Pancreas (tissue), 10 donors: ENCODE measurements at regions of chr5 and their contacts with region 1.

Region 1: DNA sequence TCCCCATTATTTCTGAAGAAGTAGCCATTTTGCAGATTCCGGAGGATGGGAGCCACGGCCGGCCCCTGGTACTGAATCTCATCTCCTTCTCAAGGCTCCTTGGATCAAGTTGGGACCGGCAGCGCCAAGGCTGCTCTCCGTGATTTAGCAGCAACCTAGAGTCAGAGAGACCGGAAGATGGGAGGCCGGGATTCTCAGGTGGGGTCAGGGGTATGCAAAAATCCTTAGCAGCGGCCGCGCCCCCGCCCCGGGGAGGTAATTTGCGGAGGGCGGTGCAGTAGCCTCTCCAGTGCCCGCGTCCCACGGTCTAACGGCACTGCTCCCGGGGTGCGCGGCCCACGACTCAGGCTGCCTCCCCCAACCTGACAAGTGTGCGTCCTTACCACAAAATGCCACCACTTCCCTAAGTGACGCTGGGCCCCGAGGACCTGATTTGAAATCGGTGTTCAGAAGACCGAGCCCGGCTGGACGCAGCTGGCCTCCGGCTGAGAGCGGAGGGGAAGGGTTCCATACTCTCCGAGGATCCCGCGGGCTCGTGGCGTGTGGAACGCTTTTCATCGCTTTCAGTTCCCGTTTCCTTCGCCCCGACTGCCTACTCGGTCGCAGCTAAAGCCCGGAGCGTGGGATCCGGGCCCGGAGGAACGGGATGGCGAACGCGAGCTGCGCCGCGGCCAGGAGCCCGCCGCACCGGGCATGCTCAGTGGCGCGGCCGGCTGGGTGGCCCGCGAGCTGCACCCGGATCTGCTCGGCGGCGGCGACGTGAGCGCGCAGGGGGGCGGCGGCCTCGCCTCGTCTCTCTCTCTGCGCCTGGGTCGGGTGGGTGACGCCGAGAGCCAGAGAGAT is at the start of gene SCAMP1:
- DNase-seq: peak; percentile 88 to 97 (median 94)
- ATAC-seq: peak; percentile 93 to 97 (median 94)
- H3K4me3 ChIP-seq: peak within 1 kb of the TSS; percentile 75 to 98 (median 88)
- H3K27ac ChIP-seq: peak within 1 kb of the TSS; percentile 88 to 98 (median 92)
- H3K4me1 ChIP-seq: peaks cover 0 to 15% (median 15%) of the 10 kb centered on the region in 3 donors
- H3K27me3 ChIP-seq: no peaks in the 10 kb centered on the region
- CTCF ChIP-seq: peak in 3 of 4 donors; percentile 29 to 40 (median 31)
- total RNA-seq, gene SCAMP1: 16.0 to 29.9 (median 24.3) TPM

Region 2: DNA sequence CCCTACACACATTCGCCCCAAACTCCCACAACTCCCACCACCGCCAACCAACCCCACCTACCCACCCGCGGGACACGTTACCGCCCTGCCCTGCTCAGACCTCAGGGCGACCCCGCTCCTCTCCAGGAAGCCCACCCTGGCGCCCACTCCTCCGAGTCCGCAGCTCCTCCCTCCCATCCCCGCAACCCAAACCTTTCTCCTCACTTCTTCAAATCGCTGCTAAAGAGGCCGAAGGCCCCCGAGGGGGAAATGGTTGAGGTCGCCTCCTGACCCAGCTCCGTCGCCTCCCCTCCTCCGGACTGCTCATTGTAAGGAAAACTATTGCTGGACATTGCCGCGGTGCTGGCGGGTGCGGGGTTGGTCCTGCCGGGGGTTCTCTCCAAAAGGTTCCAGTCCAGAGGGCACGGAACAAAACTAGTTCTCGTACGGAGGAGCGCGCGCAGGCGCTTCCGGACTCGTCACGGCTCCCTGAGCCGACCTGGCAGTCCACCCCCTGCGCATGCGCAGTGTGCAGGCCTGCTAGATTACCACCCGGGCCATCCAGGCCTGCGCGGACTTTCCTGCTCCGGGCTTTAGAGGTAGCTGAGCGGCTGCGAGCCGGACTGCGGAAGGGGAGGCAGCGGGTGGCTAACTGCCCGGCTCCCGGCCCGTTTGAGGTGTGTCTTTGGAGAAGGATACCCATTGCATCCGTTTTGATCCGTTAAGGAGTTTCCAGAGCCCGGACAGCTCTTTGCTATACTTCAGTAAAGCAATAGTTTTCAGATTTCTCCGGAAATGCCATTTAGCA is 65.6 kb before region 1 on chr5 and contains the start of gene AP3B1:
- intact Hi-C with region 1: loop called in 2 of 3 experiments (anchors 2 to 5 kb)
- DNase-seq: peak; percentile 99 to 100 (median 100)
- ATAC-seq: peak; percentile 95 to 99 (median 96)
- H3K4me3 ChIP-seq: peak within 1 kb of the TSS; percentile 57 to 64 (median 60)
- H3K27ac ChIP-seq: peak within 1 kb of the TSS; percentile 46 to 86 (median 77)
- H3K4me1 ChIP-seq: peaks cover 8 to 17% (median 16%) of the 10 kb centered on the region in 3 donors
- H3K27me3 ChIP-seq: no peaks in the 10 kb centered on the region
- CTCF ChIP-seq: no peak
- total RNA-seq, gene AP3B1: 11.9 to 23.4 (median 16.9) TPM

Region 3: GRCh38 chr5:78472469-78473106 is 112.5 kb after region 1 on chr5:
- intact Hi-C with region 1: no loop called
- DNase-seq: no peak
- ATAC-seq: peak in 2 of 4 donors; percentile 40 to 56
- H3K4me3 ChIP-seq: no peak overlapping the region
- H3K27ac ChIP-seq: no peak overlapping the region
- H3K4me1 ChIP-seq: no peaks in the 10 kb centered on the region
- H3K27me3 ChIP-seq: no peaks in the 10 kb centered on the region
- CTCF ChIP-seq: no peak

Region 4: GRCh38 chr5:78677777-78678668 is 318.0 kb after region 1 on chr5:
- intact Hi-C with region 1: no loop called
- DNase-seq: no peak
- ATAC-seq: peak in 3 of 4 donors; percentile 51 to 74 (median 59)
- H3K4me3 ChIP-seq: no peak overlapping the region
- H3K27ac ChIP-seq: no peak overlapping the region
- H3K4me1 ChIP-seq: no peaks in the 10 kb centered on the region
- H3K27me3 ChIP-seq: no peaks in the 10 kb centered on the region
- CTCF ChIP-seq: no peak